Activated CD4-positive, alpha-beta T cell treated with anti-CD3 and anti-CD28 coated beads for 36 hours (primary cell): ENCODE measurements at regions of chr2 and their contacts with region 1.

Region 1: GRCh38 chr2:101252408-101253012 is at the start of gene CNOT11:
- DNase-seq: peak; percentile 100
- ATAC-seq: peak; percentile 88
- H3K4me3 Mint-ChIP-seq: peak within 1 kb of the TSS; percentile 90
- H3K27ac Mint-ChIP-seq: peak within 1 kb of the TSS; percentile 95
- H3K4me1 Mint-ChIP-seq: peaks cover 42% of the 10 kb centered on the region
- H3K27me3 Mint-ChIP-seq: no peaks in the 10 kb centered on the region
- total RNA-seq, gene CNOT11: 57.9 to 106 TPM

Region 2: GRCh38 chr2:99489761-99490622 is 1762.5 kb before region 1 on chr2 and contains the start of gene REV1:
- CTCF ChIA-PET with region 1: no interaction called
- POLR2A ChIA-PET with region 1: no interaction called
- intact Hi-C with region 1: loop called in 1 of 2 experiments (anchors 2 kb)
- DNase-seq: peak; percentile 97
- ATAC-seq: peak; percentile 89
- H3K4me3 Mint-ChIP-seq: peak within 1 kb of the TSS; percentile 89
- H3K27ac Mint-ChIP-seq: peak within 1 kb of the TSS; percentile 99
- H3K4me1 Mint-ChIP-seq: peaks cover 33% of the 10 kb centered on the region
- H3K27me3 Mint-ChIP-seq: no peaks in the 10 kb centered on the region
- total RNA-seq, gene REV1: 30.0 to 38.2 TPM

Region 3: GRCh38 chr2:101001691-101002561 is 250.6 kb before region 1 on chr2 and contains the start of gene RPL31:
- CTCF ChIA-PET with region 1: no interaction called
- POLR2A ChIA-PET with region 1: interaction called, 6 read pairs
- intact Hi-C with region 1: loop called in 1 of 2 experiments (anchors 1 kb)
- DNase-seq: peak; percentile 98
- ATAC-seq: peak; percentile 95
- H3K4me3 Mint-ChIP-seq: peak within 1 kb of the TSS; percentile 99
- H3K27ac Mint-ChIP-seq: peak within 1 kb of the TSS; percentile 97
- H3K4me1 Mint-ChIP-seq: peaks cover 41% of the 10 kb centered on the region
- H3K27me3 Mint-ChIP-seq: no peaks in the 10 kb centered on the region
- total RNA-seq, gene RPL31: 889 to 1,817 TPM

Region 4: GRCh38 chr2:101151141-101151858 is 101.2 kb before region 1 on chr2 and contains the start of gene TBC1D8:
- CTCF ChIA-PET with region 1: interaction called, 4 read pairs
- POLR2A ChIA-PET with region 1: no interaction called
- intact Hi-C with region 1: loop called in 1 of 2 experiments (anchors 1 kb)
- DNase-seq: peak; percentile 82
- ATAC-seq: peak; percentile 93
- H3K4me3 Mint-ChIP-seq: peak within 1 kb of the TSS; percentile 71
- H3K27ac Mint-ChIP-seq: peak within 1 kb of the TSS; percentile 55
- H3K4me1 Mint-ChIP-seq: peaks cover 24% of the 10 kb centered on the region
- H3K27me3 Mint-ChIP-seq: peaks cover 21% of the 10 kb centered on the region
- total RNA-seq, gene TBC1D8: 3.3 to 3.4 TPM

Region 5: GRCh38 chr2:101272045-101272784 is 19.7 kb after region 1 on chr2:
- CTCF ChIA-PET with region 1: interaction called, 3 read pairs
- POLR2A ChIA-PET with region 1: no interaction called
- intact Hi-C with region 1: loop called (anchors 1 kb)
- DNase-seq: no peak
- ATAC-seq: peak; percentile 97
- H3K4me3 Mint-ChIP-seq: no peak overlapping the region
- H3K27ac Mint-ChIP-seq: peak overlapping the region; percentile 69
- H3K4me1 Mint-ChIP-seq: peaks cover 41% of the 10 kb centered on the region
- H3K27me3 Mint-ChIP-seq: no peaks in the 10 kb centered on the region

Region 6: DNA sequence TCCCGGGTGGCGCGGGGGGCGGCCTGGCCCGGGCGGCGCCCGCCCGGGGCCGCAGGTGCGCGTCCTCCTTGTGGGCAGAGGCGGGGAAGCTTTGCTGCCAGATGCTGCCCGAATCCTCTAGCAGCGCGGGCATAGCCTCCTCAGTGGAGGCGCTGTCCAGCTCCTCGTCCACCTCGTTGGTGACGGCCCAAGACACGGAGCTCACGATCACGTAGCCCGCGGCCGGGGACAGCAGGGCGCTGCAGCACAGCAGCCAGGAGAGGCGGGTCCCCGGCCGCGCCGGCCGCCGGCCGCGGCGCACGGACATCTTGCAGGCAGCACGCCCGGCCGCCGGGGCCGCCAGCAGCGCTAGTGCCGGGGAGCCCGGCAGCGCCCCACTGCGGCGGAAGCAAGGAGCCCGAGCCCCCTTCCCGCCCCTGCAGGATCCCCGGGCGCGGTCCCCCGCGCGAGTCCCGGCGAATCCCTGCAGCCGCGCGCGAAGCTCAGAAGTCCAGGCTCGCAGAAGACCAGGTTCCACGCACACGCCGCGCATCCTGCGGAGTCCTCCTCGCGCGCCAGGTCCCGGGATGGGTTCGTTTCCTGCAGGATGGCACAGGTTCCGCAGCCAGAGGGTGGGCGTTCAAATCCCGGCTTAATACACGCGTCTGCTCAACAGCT is 134.8 kb after region 1 on chr2 and contains the start of gene CREG2:
- CTCF ChIA-PET with region 1: interaction called, 3 read pairs
- POLR2A ChIA-PET with region 1: no interaction called
- intact Hi-C with region 1: loop called in 1 of 2 experiments (anchors 5 kb)
- DNase-seq: peak; percentile 81
- ATAC-seq: peak; percentile 93
- H3K4me3 Mint-ChIP-seq: peak within 1 kb of the TSS; percentile 55
- H3K27ac Mint-ChIP-seq: no peak within 1 kb of the TSS
- H3K4me1 Mint-ChIP-seq: peaks cover 6% of the 10 kb centered on the region
- H3K27me3 Mint-ChIP-seq: peaks cover 34% of the 10 kb centered on the region
- total RNA-seq, gene CREG2: not detected

Region 7: DNA sequence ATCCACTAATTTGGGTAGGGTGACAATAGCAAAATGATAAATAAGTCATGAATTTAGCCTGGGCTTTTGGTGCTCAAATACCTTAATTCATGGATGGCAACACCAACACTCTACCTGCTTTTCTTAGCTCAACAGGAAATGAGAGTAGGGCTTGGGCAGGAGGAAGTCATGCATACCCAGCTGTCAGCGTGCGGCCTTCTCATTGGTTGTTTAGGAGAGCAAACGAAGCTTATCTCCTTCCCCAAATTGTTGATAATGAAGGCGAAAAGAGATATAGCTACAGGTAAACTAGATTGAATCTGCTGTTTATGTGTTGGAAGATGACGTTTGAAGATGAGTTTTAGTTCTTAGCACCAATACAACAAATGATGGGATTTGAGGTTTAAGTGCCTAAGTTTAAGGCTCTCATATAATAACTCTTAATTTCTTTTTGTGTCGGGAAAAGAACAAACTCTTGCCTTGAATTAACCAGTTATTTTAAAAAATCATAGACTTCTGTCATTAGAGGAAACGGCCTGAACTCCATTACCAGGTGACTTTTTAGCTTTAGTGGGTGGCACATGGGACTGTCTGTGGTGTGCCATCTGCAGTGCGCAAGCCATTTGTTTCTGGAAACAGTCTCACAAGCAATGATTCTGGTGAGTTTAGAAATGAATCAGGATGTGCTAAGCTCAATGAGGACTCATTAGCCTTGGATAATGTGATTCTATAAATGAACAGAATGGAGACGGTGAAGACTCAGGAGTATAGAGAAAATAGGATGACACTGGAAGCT is 464.7 kb after region 1 on chr2:
- CTCF ChIA-PET with region 1: no interaction called
- POLR2A ChIA-PET with region 1: no interaction called
- intact Hi-C with region 1: loop called in 1 of 2 experiments (anchors 5 kb)
- DNase-seq: peak; percentile 71
- ATAC-seq: peak; percentile 50
- H3K4me3 Mint-ChIP-seq: peak overlapping the region; percentile 9
- H3K27ac Mint-ChIP-seq: peak overlapping the region; percentile 92
- H3K4me1 Mint-ChIP-seq: peaks cover 90% of the 10 kb centered on the region
- H3K27me3 Mint-ChIP-seq: no peaks in the 10 kb centered on the region